RWPE1 (cell line): ENCODE measurements at regions of chr2 and their contacts with region 1.

Region 1: DNA sequence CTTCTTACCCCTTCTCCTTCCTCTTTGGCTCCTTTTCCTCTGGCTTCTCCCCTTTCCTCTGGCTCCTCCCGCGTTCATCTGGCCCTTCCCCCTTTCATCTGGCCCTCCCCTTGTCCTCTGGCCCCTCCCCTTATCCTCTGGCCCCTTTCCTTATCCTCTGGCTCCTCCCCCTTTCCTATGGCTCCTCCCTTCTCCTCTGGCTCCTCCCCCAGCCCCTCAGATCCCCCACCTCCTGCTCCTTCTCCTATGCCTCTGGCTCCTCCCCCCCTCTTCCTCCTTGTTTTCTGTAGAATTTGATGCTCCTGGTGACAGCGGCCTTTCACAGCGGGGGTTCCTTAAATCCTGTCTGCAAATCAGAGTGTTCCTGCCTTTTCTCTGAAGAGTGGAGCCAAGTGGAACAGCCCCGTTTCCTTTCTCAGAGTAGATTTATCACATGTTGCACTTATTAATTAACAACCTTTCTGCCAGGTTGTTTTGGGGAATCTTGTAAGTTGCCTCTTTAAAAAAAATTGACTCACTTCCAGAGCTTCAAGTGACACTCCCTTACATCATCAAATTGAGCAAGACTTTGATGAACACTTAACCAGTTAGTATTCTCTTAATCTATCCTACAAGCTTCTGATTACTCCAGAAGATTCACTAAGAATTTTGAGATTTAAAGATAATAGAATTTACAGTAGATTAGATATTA is 27.9 kb downstream of the FABP1 start:
- DNase-seq: peak; percentile 36
- H3K27ac ChIP-seq: no peak overlapping the region
- CTCF ChIP-seq: no peak

Region 2: DNA sequence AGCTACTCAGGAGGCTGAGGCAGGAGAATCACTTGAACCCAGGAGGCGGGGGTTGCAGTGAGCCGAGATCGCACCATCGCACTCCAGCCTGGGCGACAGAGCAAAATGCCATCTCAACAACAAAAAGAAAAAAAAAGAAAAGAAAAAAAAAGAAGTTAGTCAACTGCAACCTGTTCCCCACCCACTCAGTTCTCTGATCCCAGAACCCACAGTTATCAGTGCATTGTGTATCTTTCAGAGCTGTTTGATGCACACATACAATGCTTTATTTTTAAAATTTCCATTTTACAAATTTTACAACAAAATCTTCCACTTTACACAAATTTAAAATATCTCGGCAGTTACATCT is 97.6 kb before region 1 on chr2:
- CTCF ChIA-PET with region 1: interaction called, 10 read pairs
- POLR2A ChIA-PET with region 1: no interaction called
- DNase-seq: no peak
- H3K27ac ChIP-seq: no peak overlapping the region
- CTCF ChIP-seq: no peak